CD8-positive, alpha-beta T cell (primary cell): ENCODE measurements at regions of chr17 and their contacts with region 1.

Region 1: DNA sequence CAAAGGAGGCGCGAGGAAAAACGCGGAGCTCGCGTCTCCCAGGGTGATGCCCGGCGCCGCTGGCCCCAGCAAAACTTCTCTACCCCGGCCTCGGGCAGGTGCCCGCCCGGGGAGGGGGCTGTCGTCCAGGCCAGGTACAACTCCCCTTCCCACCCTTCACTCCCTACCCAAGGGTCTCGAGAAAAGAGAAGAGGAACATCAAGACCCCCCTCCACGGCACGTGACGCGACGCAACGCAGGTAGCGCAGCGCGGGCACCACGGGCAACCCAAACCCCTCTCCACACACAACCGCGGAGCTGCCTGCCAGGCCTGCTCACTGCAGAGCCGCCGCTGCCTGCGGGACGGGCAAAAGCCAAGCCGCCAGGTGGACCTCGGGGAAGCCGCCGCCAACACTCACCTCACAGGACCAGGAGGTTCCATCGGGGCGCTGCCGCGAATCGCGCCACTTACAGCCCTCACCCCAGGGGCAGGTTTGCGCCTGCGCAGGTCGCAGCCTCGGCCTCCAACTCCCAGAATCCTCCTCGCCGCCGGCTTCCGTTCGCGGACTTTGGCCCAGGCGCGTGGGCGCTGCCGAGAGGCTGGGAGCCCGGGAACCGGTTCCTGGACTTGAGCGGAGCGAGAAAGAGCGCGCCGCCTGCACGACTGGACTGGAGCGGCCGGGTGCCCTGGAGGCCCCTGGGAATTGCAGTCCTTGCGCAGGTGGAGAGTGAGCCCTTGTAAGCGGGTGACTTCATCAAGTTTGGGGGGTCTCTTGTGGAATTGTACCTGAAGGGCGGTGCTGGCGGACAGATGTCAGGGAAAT is at the start of gene ZNF232:
- DNase-seq: peak; percentile 72 to 94 (median 88)
- ATAC-seq: peak; percentile 89
- H3K4me3 ChIP-seq: peak within 1 kb of the TSS; percentile 90 to 97
- H3K4me3 Mint-ChIP-seq: peak within 1 kb of the TSS; percentile 91
- H3K27ac ChIP-seq: peak within 1 kb of the TSS; percentile 60 to 77
- H3K27ac Mint-ChIP-seq: peak within 1 kb of the TSS; percentile 79
- H3K4me1 ChIP-seq: peaks cover 11% of the 10 kb centered on the region
- H3K4me1 Mint-ChIP-seq: peaks cover 30% of the 10 kb centered on the region
- H3K27me3 ChIP-seq: peaks cover 0 to 14% of the 10 kb centered on the region in 2 experiments
- H3K27me3 Mint-ChIP-seq: peaks cover 15% of the 10 kb centered on the region
- CTCF ChIP-seq: no peak
- total RNA-seq, gene ZNF232: 5.7 to 6.1 TPM

Region 2: DNA sequence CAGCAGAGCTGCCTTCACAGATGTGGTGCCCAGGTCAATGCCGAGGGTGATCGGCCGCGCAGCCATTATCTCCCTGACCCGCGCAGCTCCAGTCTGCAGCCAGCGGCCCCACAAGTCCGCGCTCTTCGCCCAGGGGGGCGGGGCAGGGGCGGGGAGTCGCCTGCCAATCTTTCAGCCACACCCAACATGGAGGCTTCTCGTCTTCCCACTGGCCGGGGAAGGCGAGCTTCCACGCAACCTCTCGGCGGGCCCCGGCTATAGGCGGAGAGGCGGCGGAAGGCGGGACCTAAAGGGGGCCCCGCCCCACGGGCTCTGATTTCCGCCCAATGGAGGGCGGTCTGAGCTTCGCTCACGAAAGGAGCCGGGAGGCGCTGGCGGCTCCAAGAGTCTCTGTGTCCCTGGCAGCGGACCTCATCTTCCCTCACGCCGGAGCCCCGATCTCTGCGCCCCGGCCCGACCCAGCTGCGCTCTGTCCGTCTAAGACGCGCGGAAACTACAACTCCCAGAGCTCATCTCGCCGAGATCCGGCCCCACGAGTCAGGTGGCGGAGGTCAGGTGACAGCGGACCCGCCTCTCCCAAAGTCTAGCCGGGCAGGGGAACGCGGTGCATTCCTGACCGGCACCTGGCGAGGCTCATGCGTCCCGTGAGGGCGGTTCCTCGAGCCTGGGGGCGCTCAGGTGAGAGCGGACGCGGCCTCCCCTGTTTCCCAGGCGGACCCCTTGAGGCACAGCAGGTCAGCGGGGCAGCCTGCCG is 1475.3 kb before region 1 on chr17 and contains the starts of genes CTNS and SHPK:
- CTCF ChIA-PET with region 1: no interaction called
- POLR2A ChIA-PET with region 1: no interaction called
- intact Hi-C with region 1: loop called in 1 of 2 experiments (anchors 5 kb)
- DNase-seq: peak; percentile 86 to 96 (median 94)
- ATAC-seq: peak; percentile 98
- H3K4me3 ChIP-seq: peak within 1 kb of the TSS; percentile 93 to 94
- H3K4me3 Mint-ChIP-seq: peak within 1 kb of the TSS; percentile 97
- H3K27ac ChIP-seq: peak within 1 kb of the TSS; percentile 90 to 99
- H3K27ac Mint-ChIP-seq: peak within 1 kb of the TSS; percentile 99
- H3K4me1 ChIP-seq: peaks cover 8% of the 10 kb centered on the region
- H3K4me1 Mint-ChIP-seq: peaks cover 26% of the 10 kb centered on the region
- H3K27me3 ChIP-seq: no peaks in the 10 kb centered on the region
- H3K27me3 Mint-ChIP-seq: no peaks in the 10 kb centered on the region
- CTCF ChIP-seq: no peak
- total RNA-seq, gene CTNS: 3.1 to 4.2 TPM
- total RNA-seq, gene SHPK: 2.4 to 3.0 TPM

Region 3: DNA sequence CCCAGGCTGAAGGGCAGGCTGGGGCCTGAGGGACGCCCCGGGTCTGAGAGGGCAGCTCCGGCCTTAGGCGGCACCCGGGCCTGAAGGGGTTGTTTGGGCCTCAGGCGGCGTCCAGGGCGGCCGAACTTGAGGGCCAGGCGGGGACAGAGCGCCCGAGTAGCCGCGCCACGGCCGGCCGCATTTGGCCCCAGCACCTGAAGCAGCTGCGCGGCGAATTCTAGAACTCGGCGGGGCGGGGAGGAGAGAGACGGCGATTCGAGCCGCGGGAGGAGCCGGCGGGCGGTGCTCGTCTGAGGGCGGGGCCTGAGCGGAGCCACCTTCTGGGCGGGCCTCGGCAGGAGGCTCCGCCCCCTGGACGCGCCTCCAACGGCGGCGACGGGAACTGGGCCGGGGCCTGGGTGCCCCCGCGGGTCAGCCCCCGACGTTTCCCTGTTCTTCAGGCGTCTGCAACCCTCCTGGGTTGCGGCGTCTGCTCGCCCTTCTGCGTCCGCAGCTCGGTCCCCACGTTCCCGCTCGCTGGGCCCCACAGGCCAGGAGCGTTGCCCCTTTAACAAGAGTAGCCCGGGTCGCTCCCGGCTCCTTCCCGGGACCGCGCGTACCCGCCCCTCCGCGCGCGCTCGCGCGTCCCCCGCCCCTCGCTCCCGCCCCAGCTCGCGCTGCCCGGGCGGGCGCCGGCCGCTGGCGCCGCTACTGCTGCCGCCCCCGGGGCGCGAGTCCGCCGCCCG is 114.1 kb before region 1 on chr17 and contains the starts of genes INCA1 and KIF1C:
- CTCF ChIA-PET with region 1: no interaction called
- POLR2A ChIA-PET with region 1: no interaction called
- intact Hi-C with region 1: loop called in 1 of 2 experiments (anchors 5 kb)
- DNase-seq: peak; percentile 78 to 95 (median 90)
- ATAC-seq: peak; percentile 97
- H3K4me3 ChIP-seq: peak within 1 kb of the TSS; percentile 59 to 89
- H3K4me3 Mint-ChIP-seq: peak within 1 kb of the TSS; percentile 83
- H3K27ac ChIP-seq: peak within 1 kb of the TSS; percentile 56
- H3K27ac Mint-ChIP-seq: peak within 1 kb of the TSS; percentile 84
- H3K4me1 ChIP-seq: peaks cover 20% of the 10 kb centered on the region
- H3K4me1 Mint-ChIP-seq: peaks cover 23% of the 10 kb centered on the region
- H3K27me3 ChIP-seq: no peaks in the 10 kb centered on the region
- H3K27me3 Mint-ChIP-seq: no peaks in the 10 kb centered on the region
- CTCF ChIP-seq: no peak
- total RNA-seq, gene INCA1: 0.24 TPM in 1 of 2 experiments, not detected in the other
- total RNA-seq, gene KIF1C: 7.1 to 7.2 TPM

Region 4: DNA sequence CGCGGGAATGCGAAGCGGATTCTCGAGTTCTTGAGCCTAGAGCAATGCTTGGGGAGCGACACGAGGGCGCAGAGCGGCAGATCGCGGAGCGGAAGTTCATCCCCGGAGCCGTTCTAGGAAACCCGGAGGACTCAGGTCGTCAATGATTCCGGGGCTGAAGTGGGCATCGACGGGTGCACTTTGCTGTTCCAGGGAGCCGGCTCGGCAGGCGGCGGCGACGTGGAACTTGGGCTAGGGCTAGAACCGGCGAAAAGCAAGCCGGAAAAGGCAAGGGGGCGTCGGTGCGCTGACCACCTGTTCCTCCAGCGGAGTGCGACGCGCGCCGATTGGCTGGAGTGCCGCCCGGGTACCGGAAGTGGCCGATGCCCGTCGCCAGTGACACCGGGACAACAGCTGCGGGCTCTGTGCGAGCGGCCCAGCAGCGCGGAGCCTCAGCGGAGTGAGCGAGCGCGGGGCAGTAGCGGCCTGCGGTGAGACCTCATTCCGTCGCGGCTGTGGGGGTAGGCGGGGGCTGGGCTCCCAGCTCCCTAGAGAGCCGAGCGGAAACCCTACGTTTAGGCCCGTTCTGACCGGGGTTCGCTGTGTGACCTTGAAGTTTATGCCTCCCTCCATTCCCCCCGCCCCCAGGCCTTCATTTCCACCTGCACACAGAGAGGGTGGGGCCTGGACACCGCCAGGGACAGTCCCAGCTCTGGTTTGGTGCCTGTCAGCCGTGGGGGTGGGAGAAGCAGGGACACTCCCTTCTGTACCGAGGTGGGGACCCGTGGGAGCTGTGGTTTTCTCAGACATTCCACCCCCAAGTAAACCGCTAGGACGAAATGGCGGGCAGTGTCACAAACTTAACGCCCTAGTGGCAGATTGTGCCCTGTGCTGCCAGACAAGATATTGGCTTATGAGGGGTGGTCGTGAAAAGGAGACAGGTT is 33.2 kb before region 1 on chr17 and contains the start of gene ZFP3:
- CTCF ChIA-PET with region 1: no interaction called
- POLR2A ChIA-PET with region 1: interaction called, 3 read pairs
- intact Hi-C with region 1: loop called (anchors 1 to 2 kb)
- DNase-seq: peak; percentile 43 to 88 (median 73)
- ATAC-seq: peak; percentile 75
- H3K4me3 ChIP-seq: peak within 1 kb of the TSS; percentile 76 to 80
- H3K4me3 Mint-ChIP-seq: peak within 1 kb of the TSS; percentile 96
- H3K27ac ChIP-seq: peak within 1 kb of the TSS; percentile 65 to 76
- H3K27ac Mint-ChIP-seq: peak within 1 kb of the TSS; percentile 95
- H3K4me1 ChIP-seq: peaks cover 14% of the 10 kb centered on the region
- H3K4me1 Mint-ChIP-seq: peaks cover 29% of the 10 kb centered on the region
- H3K27me3 ChIP-seq: no peaks in the 10 kb centered on the region
- H3K27me3 Mint-ChIP-seq: no peaks in the 10 kb centered on the region
- CTCF ChIP-seq: peak; percentile 29
- total RNA-seq, gene ZFP3: 2.6 to 2.7 TPM

Region 5: DNA sequence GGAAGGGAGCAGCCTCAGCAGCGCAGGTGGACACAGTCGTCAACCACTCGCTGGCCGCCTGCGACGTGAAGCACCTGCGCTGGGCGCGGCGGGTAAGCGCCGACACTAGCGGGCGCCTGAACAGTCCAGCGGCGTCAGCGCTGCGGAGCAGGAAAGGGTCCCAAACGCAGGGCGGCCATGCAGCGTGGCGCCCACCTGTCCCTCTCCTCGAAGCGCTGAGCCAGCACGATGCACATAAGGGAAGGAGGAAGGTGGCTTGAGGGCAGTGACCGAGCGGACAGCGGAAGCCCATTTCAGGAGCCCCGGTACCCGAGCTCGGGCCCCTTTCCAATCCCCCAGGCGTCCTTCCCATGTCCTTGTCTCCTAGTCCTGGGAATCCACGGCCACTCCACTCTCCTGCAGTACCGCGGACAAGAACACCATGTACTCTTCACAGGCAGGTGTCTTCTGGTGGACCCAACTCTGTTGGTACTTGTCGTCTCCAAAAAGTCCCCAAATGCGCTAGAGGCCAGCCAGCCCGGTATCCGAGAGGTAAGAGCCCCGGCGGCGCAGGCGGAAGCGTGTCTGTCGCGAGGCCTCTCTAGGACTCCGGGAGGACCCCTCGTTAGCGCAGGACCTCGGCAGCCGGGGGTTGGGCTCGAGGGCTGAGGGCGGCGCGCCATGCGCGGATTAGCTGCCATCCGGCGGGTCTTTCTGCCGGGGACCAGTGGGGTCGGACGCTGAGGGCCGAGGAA is 14.3 kb before region 1 on chr17:
- CTCF ChIA-PET with region 1: interaction called, 3 read pairs
- POLR2A ChIA-PET with region 1: interaction called, 3 read pairs
- intact Hi-C with region 1: loop called in 1 of 2 experiments (anchors 1 kb)
- DNase-seq: peak in 8 of 9 experiments; percentile 36 to 74 (median 61)
- ATAC-seq: peak; percentile 93
- H3K4me3 ChIP-seq: peak overlapping the region; percentile 51 to 56
- H3K4me3 Mint-ChIP-seq: peak overlapping the region; percentile 89
- H3K27ac ChIP-seq: no peak overlapping the region
- H3K27ac Mint-ChIP-seq: peak overlapping the region; percentile 84
- H3K4me1 ChIP-seq: peaks cover 4% of the 10 kb centered on the region
- H3K4me1 Mint-ChIP-seq: peaks cover 10% of the 10 kb centered on the region
- H3K27me3 ChIP-seq: peaks cover 0 to 8% of the 10 kb centered on the region in 2 experiments
- H3K27me3 Mint-ChIP-seq: peaks cover 6% of the 10 kb centered on the region
- CTCF ChIP-seq: no peak

Region 6: GRCh38 chr17:5122586-5123342 is 11.2 kb after region 1 on chr17:
- CTCF ChIA-PET with region 1: no interaction called
- POLR2A ChIA-PET with region 1: no interaction called
- intact Hi-C with region 1: no loop called
- DNase-seq: peak in 3 of 9 experiments; percentile 20 to 50 (median 21)
- ATAC-seq: peak; percentile 55
- H3K4me3 ChIP-seq: peak overlapping the region in 1 of 2 experiments; percentile 25
- H3K4me3 Mint-ChIP-seq: no peak overlapping the region
- H3K27ac ChIP-seq: no peak overlapping the region
- H3K27ac Mint-ChIP-seq: no peak overlapping the region
- H3K4me1 ChIP-seq: no peaks in the 10 kb centered on the region
- H3K4me1 Mint-ChIP-seq: no peaks in the 10 kb centered on the region
- H3K27me3 ChIP-seq: peaks cover 0 to 8% of the 10 kb centered on the region in 2 experiments
- H3K27me3 Mint-ChIP-seq: peaks cover 43% of the 10 kb centered on the region
- CTCF ChIP-seq: no peak

Region 7: GRCh38 chr17:5210614-5211252 is 99.1 kb after region 1 on chr17:
- CTCF ChIA-PET with region 1: no interaction called
- POLR2A ChIA-PET with region 1: no interaction called
- intact Hi-C with region 1: no loop called
- DNase-seq: no peak
- ATAC-seq: no peak
- H3K4me3 ChIP-seq: no peak overlapping the region
- H3K4me3 Mint-ChIP-seq: peak overlapping the region; percentile 16
- H3K27ac ChIP-seq: peak overlapping the region in 1 of 2 experiments; percentile 9
- H3K27ac Mint-ChIP-seq: peak overlapping the region; percentile 88
- H3K4me1 ChIP-seq: peaks cover 19% of the 10 kb centered on the region
- H3K4me1 Mint-ChIP-seq: peaks cover 18% of the 10 kb centered on the region
- H3K27me3 ChIP-seq: no peaks in the 10 kb centered on the region
- H3K27me3 Mint-ChIP-seq: no peaks in the 10 kb centered on the region
- CTCF ChIP-seq: no peak

Region 8: DNA sequence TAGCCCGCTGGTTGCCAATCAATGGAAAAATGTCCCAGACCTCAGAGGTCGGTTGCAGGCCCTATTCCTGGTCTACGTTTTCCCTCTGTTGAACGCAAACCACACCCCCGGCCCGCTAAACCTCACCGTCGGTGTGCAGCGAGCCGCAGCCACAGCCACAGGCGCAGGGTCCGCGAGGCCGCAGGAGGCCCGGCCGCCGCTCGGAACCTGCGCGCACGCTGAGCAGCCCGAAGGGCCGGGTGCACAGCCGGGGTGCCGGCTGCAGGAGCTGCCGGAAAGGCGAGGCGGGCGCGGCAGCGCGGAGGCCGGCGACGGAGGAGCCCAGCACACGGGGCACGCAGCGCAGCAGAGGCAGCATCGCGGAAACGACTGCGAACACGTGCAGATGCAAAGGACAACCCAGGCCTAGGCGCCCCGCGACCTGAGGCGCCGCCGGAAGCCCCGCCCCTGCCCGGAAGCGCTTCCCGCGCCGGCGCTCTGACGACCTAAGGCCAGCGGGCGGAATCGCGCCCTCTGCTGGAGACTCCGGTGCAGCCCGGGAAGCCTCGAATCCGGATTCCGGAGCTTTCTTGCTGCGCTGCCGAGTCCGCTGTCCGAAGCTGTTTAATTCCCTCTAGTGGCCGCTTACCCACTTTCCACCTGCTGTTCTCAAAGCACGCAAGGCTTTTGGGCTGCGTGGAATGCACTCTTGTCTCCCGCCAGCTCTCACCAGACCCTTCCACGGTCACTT is 327.3 kb after region 1 on chr17 and contains the start of gene C1QBP:
- CTCF ChIA-PET with region 1: no interaction called
- POLR2A ChIA-PET with region 1: no interaction called
- intact Hi-C with region 1: loop called in 1 of 2 experiments (anchors 2 kb)
- DNase-seq: peak; percentile 87 to 96 (median 91)
- ATAC-seq: peak; percentile 92
- H3K4me3 ChIP-seq: peak within 1 kb of the TSS; percentile 56 to 83
- H3K4me3 Mint-ChIP-seq: peak within 1 kb of the TSS; percentile 81
- H3K27ac ChIP-seq: peak within 1 kb of the TSS; percentile 63 to 86
- H3K27ac Mint-ChIP-seq: peak within 1 kb of the TSS; percentile 93
- H3K4me1 ChIP-seq: peaks cover 30% of the 10 kb centered on the region
- H3K4me1 Mint-ChIP-seq: peaks cover 40% of the 10 kb centered on the region
- H3K27me3 ChIP-seq: no peaks in the 10 kb centered on the region
- H3K27me3 Mint-ChIP-seq: no peaks in the 10 kb centered on the region
- CTCF ChIP-seq: peak; percentile 98
- total RNA-seq, gene C1QBP: 72.0 to 79.9 TPM

Region 9: GRCh38 chr17:5468075-5468473 is 356.5 kb after region 1 on chr17:
- CTCF ChIA-PET with region 1: no interaction called
- POLR2A ChIA-PET with region 1: no interaction called
- intact Hi-C with region 1: loop called in 1 of 2 experiments (anchors 5 kb)
- DNase-seq: peak in 4 of 9 experiments; percentile 9 to 45 (median 18)
- ATAC-seq: peak; percentile 16
- H3K4me3 ChIP-seq: peak overlapping the region; percentile 78 to 84
- H3K4me3 Mint-ChIP-seq: peak overlapping the region; percentile 81
- H3K27ac ChIP-seq: peak overlapping the region; percentile 49 to 53
- H3K27ac Mint-ChIP-seq: peak overlapping the region; percentile 46
- H3K4me1 ChIP-seq: peaks cover 10% of the 10 kb centered on the region
- H3K4me1 Mint-ChIP-seq: peaks cover 31% of the 10 kb centered on the region
- H3K27me3 ChIP-seq: no peaks in the 10 kb centered on the region
- H3K27me3 Mint-ChIP-seq: no peaks in the 10 kb centered on the region
- CTCF ChIP-seq: no peak